ENCODE measurements at regions of chr2 and their contacts with region 1.

Region 1: GRCh38 chr2:135590619-135591260 is 59.5 kb downstream of the R3HDM1 start:
- DNase-seq: no peak
- ATAC-seq: no peak
- H3K4me3 ChIP-seq: no peak overlapping the region
- H3K27ac ChIP-seq: no peak overlapping the region
- H3K4me1 ChIP-seq: peaks cover 0 to 2% (median 0%) of the 10 kb centered on the region in 12 donors
- H3K27me3 ChIP-seq: no peaks in the 10 kb centered on the region
- CTCF ChIP-seq: no peak
- POLR2A ChIP-seq: no peak

Region 2: GRCh38 chr2:135473567-135473966 is 117.2 kb before region 1 on chr2:
- intact Hi-C with region 1: loop called in 1 of 10 experiments (anchors 10 kb)
- DNase-seq: no peak
- ATAC-seq: peak in 2 of 4 donors; percentile 33 to 41
- H3K4me3 ChIP-seq: no peak overlapping the region
- H3K27ac ChIP-seq: no peak overlapping the region
- H3K4me1 ChIP-seq: no peaks in the 10 kb centered on the region
- H3K27me3 ChIP-seq: no peaks in the 10 kb centered on the region
- CTCF ChIP-seq: peak; percentile 24 to 62 (median 47)
- POLR2A ChIP-seq: no peak

Measured in heart left ventricle (tissue), 16 donors.